ENCODE measurements at regions of chr2 and their contacts with region 1.

Region 1: DNA sequence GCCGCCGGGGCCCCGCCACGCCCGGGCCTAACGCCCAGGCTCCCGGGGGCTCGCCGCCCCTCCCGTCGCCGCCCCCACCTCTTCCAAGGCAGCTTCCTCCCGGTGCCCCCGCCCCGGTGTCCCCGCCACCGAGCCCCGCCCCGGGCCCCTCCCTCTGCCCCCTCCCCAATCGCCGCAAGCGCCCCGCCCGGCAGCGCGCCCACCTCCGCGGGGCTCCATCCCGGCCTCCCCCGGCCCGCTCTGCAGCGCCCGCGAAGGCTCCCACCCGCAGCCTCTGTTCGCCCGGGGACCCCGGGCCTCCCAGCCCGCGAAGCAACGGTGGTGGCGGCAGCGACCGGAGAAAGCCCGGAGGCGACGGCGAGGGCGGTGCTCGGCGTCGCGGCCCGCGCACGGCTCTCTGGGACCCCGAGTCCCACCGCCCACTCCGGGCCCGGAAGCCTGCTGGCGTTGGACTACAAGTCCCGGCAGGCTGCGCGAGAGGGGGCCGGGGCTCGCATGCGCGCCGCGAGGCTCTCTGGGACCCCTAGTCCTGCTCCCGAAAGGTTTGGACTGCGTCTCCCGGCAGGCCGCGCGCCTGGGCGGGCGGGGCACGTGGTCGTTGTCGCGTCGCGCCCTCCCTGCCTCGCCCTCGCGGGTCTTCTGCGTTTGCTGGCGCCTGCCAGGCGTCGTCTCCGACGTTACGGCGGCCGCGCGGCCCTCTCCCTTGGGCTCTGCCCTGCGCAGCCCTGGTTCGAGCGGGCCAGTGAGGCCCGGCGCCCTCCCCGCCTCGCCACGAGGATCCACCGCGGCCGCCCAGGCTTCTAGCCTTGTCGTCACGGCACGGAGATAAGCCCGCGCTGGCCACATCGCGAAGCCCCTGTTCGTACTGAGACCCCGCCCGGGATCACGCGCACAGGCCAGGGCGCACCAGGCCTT is at the start of gene STK25:
- DNase-seq: peak; percentile 94 to 98 (median 97)
- ATAC-seq: peak; percentile 93
- H3K4me3 ChIP-seq: peak within 1 kb of the TSS; percentile 71 to 72
- H3K4me3 Mint-ChIP-seq: peak within 1 kb of the TSS; percentile 81
- H3K27ac ChIP-seq: peak within 1 kb of the TSS; percentile 78 to 81
- H3K27ac Mint-ChIP-seq: peak within 1 kb of the TSS; percentile 85
- H3K4me1 ChIP-seq: peaks cover 21% of the 10 kb centered on the region
- H3K4me1 Mint-ChIP-seq: peaks cover 24% of the 10 kb centered on the region
- H3K27me3 ChIP-seq: no peaks in the 10 kb centered on the region
- H3K27me3 Mint-ChIP-seq: no peaks in the 10 kb centered on the region
- CTCF ChIP-seq: no peak
- total RNA-seq, gene STK25: 58.7 to 66.4 TPM

Region 2: DNA sequence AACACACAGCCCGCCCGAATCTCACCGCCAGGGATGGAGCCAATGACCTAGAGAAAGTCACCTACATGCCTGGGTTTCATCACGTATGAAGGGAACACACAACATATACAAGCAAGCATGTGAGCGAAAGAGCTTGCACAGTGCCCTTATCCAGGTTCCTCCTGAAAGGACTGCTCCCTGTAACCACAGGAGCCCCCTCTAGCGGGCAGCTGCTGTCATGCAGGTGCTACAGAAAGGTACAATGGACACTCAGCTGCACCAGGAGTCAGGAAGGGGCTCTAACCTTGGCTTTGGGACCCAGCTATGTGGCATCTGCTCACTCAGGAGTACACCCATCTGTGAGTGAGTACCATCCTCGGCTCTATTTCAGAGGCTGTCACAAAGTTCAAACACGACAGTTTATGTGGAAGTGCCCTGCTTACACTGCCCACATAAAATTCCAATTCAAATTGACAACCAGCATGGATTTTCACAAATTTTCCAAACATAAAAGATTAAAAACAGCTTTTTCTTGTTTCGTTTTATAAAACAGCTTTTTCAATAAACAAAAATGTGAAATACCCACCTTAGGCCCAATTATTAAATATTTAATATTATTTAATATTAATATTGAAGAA is 1486.9 kb before region 1 on chr2:
- CTCF ChIA-PET with region 1: no interaction called
- POLR2A ChIA-PET with region 1: no interaction called
- intact Hi-C with region 1: loop called in 1 of 2 experiments (anchors 10 kb)
- DNase-seq: peak; percentile 15 to 72 (median 64)
- ATAC-seq: peak; percentile 35
- H3K4me3 ChIP-seq: no peak overlapping the region
- H3K4me3 Mint-ChIP-seq: no peak overlapping the region
- H3K27ac ChIP-seq: no peak overlapping the region
- H3K27ac Mint-ChIP-seq: no peak overlapping the region
- H3K4me1 ChIP-seq: peaks cover 14% of the 10 kb centered on the region
- H3K4me1 Mint-ChIP-seq: peaks cover 29% of the 10 kb centered on the region
- H3K27me3 ChIP-seq: no peaks in the 10 kb centered on the region
- H3K27me3 Mint-ChIP-seq: no peaks in the 10 kb centered on the region
- CTCF ChIP-seq: peak; percentile 82

Region 3: DNA sequence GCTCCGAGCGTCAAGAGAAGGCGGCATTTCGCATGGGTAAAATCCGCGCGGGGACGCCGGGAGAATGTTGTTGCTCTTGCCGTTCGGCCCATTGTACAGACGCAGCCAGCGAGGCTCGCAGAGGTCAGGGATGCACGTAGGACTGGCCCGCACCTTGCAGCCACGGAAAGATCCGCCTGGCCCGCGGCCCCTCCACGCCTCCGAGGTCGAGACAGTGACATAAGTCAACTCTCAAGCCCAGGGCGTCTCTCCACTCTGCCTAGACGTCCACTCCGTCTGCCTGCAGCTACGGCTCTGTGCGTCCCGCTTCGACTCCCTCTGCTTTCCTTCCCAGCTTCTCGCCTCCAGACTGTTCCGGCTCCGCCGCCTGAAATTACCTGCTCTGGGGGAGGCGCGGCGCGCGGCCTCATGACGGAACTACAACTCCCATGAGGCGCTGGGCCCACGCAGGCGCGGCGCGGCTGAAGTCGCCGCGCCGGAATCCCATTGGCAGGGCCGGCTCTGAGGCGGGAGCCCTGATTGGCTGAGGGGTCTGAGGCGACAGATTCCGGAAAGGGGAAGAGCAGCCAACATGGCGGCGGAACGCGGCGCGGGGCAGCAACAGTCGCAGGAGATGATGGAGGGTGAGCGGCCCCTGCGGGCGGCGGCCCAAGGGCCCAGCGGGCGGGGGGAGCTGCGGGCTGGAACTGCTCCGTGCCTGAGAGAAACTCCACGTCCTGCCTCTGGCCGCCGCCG is 358.4 kb before region 1 on chr2 and contains the start of gene PPP1R7:
- CTCF ChIA-PET with region 1: no interaction called
- POLR2A ChIA-PET with region 1: no interaction called
- intact Hi-C with region 1: loop called (anchors 5 kb)
- DNase-seq: peak; percentile 91 to 98 (median 94)
- ATAC-seq: peak; percentile 79
- H3K4me3 ChIP-seq: peak within 1 kb of the TSS; percentile 95 to 99
- H3K4me3 Mint-ChIP-seq: peak within 1 kb of the TSS; percentile 99
- H3K27ac ChIP-seq: peak within 1 kb of the TSS; percentile 67 to 70
- H3K27ac Mint-ChIP-seq: peak within 1 kb of the TSS; percentile 95
- H3K4me1 ChIP-seq: peaks cover 21% of the 10 kb centered on the region
- H3K4me1 Mint-ChIP-seq: peaks cover 48% of the 10 kb centered on the region
- H3K27me3 ChIP-seq: no peaks in the 10 kb centered on the region
- H3K27me3 Mint-ChIP-seq: no peaks in the 10 kb centered on the region
- CTCF ChIP-seq: peak; percentile 51
- total RNA-seq, gene PPP1R7: 47.5 to 50.9 TPM

Region 4: DNA sequence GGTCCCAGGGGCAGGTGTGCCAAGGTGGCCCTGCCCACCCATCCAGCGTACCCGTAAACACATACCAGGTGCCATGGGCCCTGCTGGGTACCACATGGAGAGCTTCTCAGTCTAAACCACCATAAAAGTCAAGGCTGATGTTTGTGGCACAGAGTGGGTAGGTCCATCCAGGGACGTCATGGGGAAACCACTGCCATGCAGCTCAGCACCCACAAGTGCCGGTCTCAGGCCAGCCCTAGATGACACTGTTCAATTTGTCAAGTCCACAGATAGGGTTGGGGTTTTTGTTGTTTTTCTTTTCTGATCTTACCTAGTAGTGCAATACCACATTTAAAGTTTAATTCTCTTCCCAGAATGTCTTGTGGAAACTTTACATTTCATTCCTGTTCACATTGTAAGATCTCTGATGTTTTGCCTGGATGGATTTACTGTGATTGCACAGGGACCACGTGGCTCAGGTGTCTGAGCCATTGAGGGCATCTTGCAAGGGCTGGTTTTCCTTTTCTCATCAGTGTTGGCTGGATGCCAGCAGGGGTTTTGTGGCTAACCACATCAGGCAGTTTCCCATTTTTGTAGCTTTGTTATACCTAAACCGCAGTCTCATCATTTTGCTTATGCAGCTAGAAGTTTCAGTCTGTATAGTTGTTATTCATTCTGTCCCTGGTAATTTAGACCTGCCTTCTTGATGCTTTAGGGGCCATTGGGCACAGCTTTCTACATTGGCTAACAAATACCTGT is 64.8 kb before region 1 on chr2:
- CTCF ChIA-PET with region 1: no interaction called
- POLR2A ChIA-PET with region 1: no interaction called
- intact Hi-C with region 1: loop called in 1 of 2 experiments (anchors 1 kb)
- DNase-seq: peak; percentile 82 to 97 (median 93)
- ATAC-seq: peak; percentile 78
- H3K4me3 ChIP-seq: no peak overlapping the region
- H3K4me3 Mint-ChIP-seq: no peak overlapping the region
- H3K27ac ChIP-seq: no peak overlapping the region
- H3K27ac Mint-ChIP-seq: peak overlapping the region; percentile 47
- H3K4me1 ChIP-seq: peaks cover 24% of the 10 kb centered on the region
- H3K4me1 Mint-ChIP-seq: peaks cover 16% of the 10 kb centered on the region
- H3K27me3 ChIP-seq: peaks cover 6 to 32% of the 10 kb centered on the region in 2 experiments
- H3K27me3 Mint-ChIP-seq: peaks cover 59% of the 10 kb centered on the region
- CTCF ChIP-seq: no peak

Region 5: DNA sequence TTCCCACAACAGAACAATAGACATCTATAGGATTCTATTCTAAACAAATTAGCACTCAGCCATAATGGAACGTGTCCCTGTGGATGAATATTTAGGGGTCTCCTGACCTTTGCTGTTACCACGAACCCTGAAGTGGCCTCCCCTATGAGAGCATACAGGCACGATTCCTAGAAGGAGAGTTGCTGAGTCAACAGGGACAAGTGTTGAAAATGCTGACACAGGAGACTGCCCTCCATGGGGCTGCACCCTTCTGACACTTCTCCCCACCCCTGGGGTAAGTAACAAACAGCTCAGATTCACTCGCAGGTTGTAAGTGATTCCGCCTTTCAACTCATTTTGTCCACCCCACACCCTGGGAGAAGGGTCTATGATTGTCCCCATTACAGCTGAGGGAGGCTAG is 14.0 kb after region 1 on chr2:
- CTCF ChIA-PET with region 1: no interaction called
- POLR2A ChIA-PET with region 1: no interaction called
- intact Hi-C with region 1: no loop called
- DNase-seq: no peak
- ATAC-seq: no peak
- H3K4me3 ChIP-seq: no peak overlapping the region
- H3K4me3 Mint-ChIP-seq: no peak overlapping the region
- H3K27ac ChIP-seq: no peak overlapping the region
- H3K27ac Mint-ChIP-seq: no peak overlapping the region
- H3K4me1 ChIP-seq: no peaks in the 10 kb centered on the region
- H3K4me1 Mint-ChIP-seq: no peaks in the 10 kb centered on the region
- H3K27me3 ChIP-seq: no peaks in the 10 kb centered on the region
- H3K27me3 Mint-ChIP-seq: peaks cover 20% of the 10 kb centered on the region
- CTCF ChIP-seq: no peak

Region 6: GRCh38 chr2:241617431-241618154 is 109.1 kb after region 1 on chr2:
- CTCF ChIA-PET with region 1: no interaction called
- POLR2A ChIA-PET with region 1: no interaction called
- intact Hi-C with region 1: loop called in 1 of 2 experiments (anchors 1 kb)
- DNase-seq: peak in 6 of 9 experiments; percentile 11 to 80 (median 46)
- ATAC-seq: peak; percentile 86
- H3K4me3 ChIP-seq: peak overlapping the region; percentile 55 to 73
- H3K4me3 Mint-ChIP-seq: peak overlapping the region; percentile 89
- H3K27ac ChIP-seq: peak overlapping the region; percentile 61 to 70
- H3K27ac Mint-ChIP-seq: peak overlapping the region; percentile 88
- H3K4me1 ChIP-seq: peaks cover 15% of the 10 kb centered on the region
- H3K4me1 Mint-ChIP-seq: peaks cover 31% of the 10 kb centered on the region
- H3K27me3 ChIP-seq: no peaks in the 10 kb centered on the region
- H3K27me3 Mint-ChIP-seq: no peaks in the 10 kb centered on the region
- CTCF ChIP-seq: no peak

Region 7: GRCh38 chr2:241702132-241703031 is 193.9 kb after region 1 on chr2:
- CTCF ChIA-PET with region 1: no interaction called
- POLR2A ChIA-PET with region 1: no interaction called
- intact Hi-C with region 1: loop called in 1 of 2 experiments (anchors 1 kb)
- DNase-seq: peak; percentile 79 to 94 (median 92)
- ATAC-seq: peak; percentile 82
- H3K4me3 ChIP-seq: peak overlapping the region; percentile 49 to 86
- H3K4me3 Mint-ChIP-seq: peak overlapping the region; percentile 85
- H3K27ac ChIP-seq: peak overlapping the region; percentile 63 to 71
- H3K27ac Mint-ChIP-seq: peak overlapping the region; percentile 82
- H3K4me1 ChIP-seq: peaks cover 11% of the 10 kb centered on the region
- H3K4me1 Mint-ChIP-seq: peaks cover 18% of the 10 kb centered on the region
- H3K27me3 ChIP-seq: no peaks in the 10 kb centered on the region
- H3K27me3 Mint-ChIP-seq: no peaks in the 10 kb centered on the region
- CTCF ChIP-seq: peak; percentile 79

Measured in CD8-positive, alpha-beta T cell (primary cell).